IMR-90 (cell line): ENCODE measurements at regions of chr2 and their contacts with region 1.

Region 1: DNA sequence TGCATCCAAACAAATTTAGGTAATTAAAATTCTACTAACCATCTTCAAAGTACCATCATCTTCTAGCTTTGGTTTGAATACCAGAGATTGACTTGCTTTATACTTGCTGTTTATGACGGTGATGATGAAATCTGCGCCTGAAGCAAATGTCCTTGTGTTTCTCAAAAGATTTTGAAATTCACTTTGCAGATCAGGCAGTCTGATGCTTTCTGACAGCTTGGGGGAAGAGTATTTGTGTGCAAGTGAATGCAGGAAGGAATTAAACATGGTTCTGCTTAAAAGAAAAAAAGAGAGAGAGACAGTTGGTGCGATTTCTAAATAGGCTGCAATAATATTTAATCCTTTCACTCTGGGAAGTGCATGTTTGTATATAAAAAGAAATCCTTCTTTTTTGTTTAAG is 29.6 kb downstream of the CSRNP3 start:
- DNase-seq: no peak
- ATAC-seq: no peak
- H3K4me3 ChIP-seq: no peak overlapping the region
- H3K27ac ChIP-seq: no peak overlapping the region
- H3K4me1 ChIP-seq: no peaks in the 10 kb centered on the region
- H3K27me3 ChIP-seq: no peaks in the 10 kb centered on the region
- CTCF ChIP-seq: no peak
- POLR2A ChIP-seq: no peak
- RAD21 ChIP-seq: no peak

Region 2: GRCh38 chr2:165475277-165476004 is 23.7 kb before region 1 on chr2:
- CTCF ChIA-PET with region 1: no interaction called
- POLR2A ChIA-PET with region 1: no interaction called
- dilution Hi-C with region 1: no loop called
- in situ Hi-C with region 1: no loop called
- intact Hi-C with region 1: loop called (anchors 2 kb)
- DNase-seq: no peak
- ATAC-seq: no peak
- H3K4me3 ChIP-seq: no peak overlapping the region
- H3K27ac ChIP-seq: no peak overlapping the region
- H3K4me1 ChIP-seq: no peaks in the 10 kb centered on the region
- H3K27me3 ChIP-seq: no peaks in the 10 kb centered on the region
- CTCF ChIP-seq: no peak
- POLR2A ChIP-seq: no peak
- RAD21 ChIP-seq: no peak